B cell (primary cell): ENCODE measurements at regions of chr17 and their contacts with region 1.

Region 1: GRCh38 chr17:40647624-40648383 is at the start of gene SMARCE1:
- DNase-seq: peak; percentile 94
- ATAC-seq: peak; percentile 85
- H3K4me3 ChIP-seq: peak within 1 kb of the TSS; percentile 85 to 94 (median 86)
- H3K4me3 Mint-ChIP-seq: peak within 1 kb of the TSS; percentile 89
- H3K27ac ChIP-seq: peak within 1 kb of the TSS; percentile 97 to 100
- H3K27ac Mint-ChIP-seq: peak within 1 kb of the TSS; percentile 94
- H3K4me1 ChIP-seq: peaks cover 25 to 30% of the 10 kb centered on the region in 2 donors
- H3K4me1 Mint-ChIP-seq: peaks cover 38% of the 10 kb centered on the region
- H3K27me3 ChIP-seq: no peaks in the 10 kb centered on the region
- H3K27me3 Mint-ChIP-seq: no peaks in the 10 kb centered on the region
- CTCF ChIP-seq: no peak
- total RNA-seq, gene SMARCE1: 123 and 128 TPM in 2 replicates

Region 2: GRCh38 chr17:40726919-40727318 is 79.1 kb after region 1 on chr17:
- CTCF ChIA-PET with region 1: interaction called, 4 read pairs
- POLR2A ChIA-PET with region 1: no interaction called
- intact Hi-C with region 1: loop called (anchors 1 kb)
- DNase-seq: peak; percentile 12
- ATAC-seq: no peak
- H3K4me3 ChIP-seq: no peak overlapping the region
- H3K4me3 Mint-ChIP-seq: peak overlapping the region; percentile 12
- H3K27ac ChIP-seq: peak overlapping the region; percentile 66 to 73
- H3K27ac Mint-ChIP-seq: peak overlapping the region; percentile 65
- H3K4me1 ChIP-seq: peaks cover 20% of the 10 kb centered on the region in 2 donors
- H3K4me1 Mint-ChIP-seq: peaks cover 22% of the 10 kb centered on the region
- H3K27me3 ChIP-seq: no peaks in the 10 kb centered on the region
- H3K27me3 Mint-ChIP-seq: peaks cover 10% of the 10 kb centered on the region
- CTCF ChIP-seq: no peak

Region 3: DNA sequence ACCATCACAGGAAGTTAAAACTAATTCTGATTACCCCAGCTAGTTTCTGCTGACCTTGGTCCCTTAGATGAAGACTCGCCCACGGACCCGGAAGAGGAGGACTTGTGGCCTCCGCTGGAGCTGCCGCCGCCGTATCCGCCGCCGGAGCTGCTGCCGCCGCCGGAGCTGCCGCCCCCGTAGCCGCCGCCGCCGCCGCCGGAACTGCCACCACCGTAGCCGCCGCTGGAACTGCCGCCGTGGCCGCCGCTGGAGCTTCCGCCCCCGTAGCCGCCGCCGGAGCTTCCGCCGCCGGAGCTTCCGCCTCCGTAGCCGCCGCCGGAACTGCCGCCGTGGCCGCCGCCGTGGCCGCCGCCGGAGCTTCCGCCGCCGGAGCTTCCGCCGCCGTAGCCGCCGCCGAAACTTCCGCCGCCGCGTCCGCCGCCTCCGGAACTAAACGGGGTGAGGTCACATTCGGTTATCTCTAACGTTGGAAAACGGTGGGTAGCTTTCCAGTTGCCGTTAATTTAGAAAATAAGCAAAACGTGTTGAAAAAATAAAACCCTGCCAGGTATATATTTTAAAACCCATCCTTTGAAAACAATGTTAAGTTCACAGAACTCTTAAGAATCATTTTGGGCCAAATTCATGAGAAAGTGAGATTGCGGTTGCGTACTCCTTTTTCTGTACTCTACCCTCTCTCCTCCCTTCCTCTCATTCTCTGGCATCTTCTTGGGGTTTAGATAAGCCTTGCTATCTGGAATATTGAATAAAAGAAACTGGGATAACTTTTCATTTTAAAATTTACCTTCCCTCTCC is 171.1 kb after region 1 on chr17:
- CTCF ChIA-PET with region 1: no interaction called
- POLR2A ChIA-PET with region 1: interaction called, 5 read pairs
- intact Hi-C with region 1: loop called (anchors 2 kb)
- DNase-seq: peak; percentile 95
- ATAC-seq: peak; percentile 91
- H3K4me3 ChIP-seq: peak overlapping the region; percentile 50 to 95 (median 71)
- H3K4me3 Mint-ChIP-seq: peak overlapping the region; percentile 89
- H3K27ac ChIP-seq: peak overlapping the region; percentile 68 to 86
- H3K27ac Mint-ChIP-seq: peak overlapping the region; percentile 85
- H3K4me1 ChIP-seq: peaks cover 8 to 13% of the 10 kb centered on the region in 2 donors
- H3K4me1 Mint-ChIP-seq: peaks cover 18% of the 10 kb centered on the region
- H3K27me3 ChIP-seq: peaks cover 0 to 6% (median 0%) of the 10 kb centered on the region in 4 experiments
- H3K27me3 Mint-ChIP-seq: peaks cover 16% of the 10 kb centered on the region
- CTCF ChIP-seq: no peak